K562 (cell line): ENCODE measurements at regions of chr1 and their contacts with region 1.

Region 1: DNA sequence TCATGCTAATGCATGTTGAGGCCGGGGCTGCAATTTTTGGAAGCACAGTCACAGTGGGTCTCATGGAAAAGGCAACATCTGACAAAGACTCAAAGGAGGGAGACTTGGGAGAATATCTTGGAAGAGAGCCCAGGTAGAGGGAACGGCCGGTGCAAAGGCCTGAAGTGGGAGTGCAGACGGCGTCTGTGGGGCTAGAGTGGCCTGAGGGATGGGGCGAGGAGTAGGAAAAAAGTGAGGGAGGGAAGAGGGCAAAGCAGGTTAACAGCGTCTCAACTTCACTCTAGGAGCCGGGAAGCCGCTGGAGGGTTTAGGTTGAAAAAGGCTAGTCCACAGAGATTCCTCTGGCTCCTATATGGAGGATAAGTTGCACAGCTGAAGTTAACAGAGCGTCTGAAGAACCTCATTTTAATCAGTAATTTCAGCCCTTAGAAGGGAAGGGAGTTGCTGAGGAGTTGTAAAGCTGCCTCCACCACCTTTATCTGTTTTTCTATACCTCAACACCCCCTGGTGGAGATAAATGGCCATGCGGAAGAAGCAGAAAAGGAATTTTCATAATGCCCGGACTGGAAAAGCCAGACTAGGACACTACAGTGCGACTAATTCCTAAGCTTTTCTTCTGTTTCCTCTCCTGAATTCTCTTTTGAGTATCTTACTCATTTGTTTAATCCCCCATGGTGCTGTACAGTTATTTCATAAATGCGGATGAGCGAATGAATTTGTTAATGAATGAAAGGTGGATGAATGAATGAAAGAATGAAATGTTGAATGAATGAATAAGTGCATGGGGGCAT is 78.7 kb upstream of the ZNF281 start:
- DNase-seq: peak; percentile 60 to 74 (median 66)
- ATAC-seq: peak; percentile 92
- H3K4me3 ChIP-seq: no peak overlapping the region
- H3K27ac ChIP-seq: no peak overlapping the region
- H3K4me1 ChIP-seq: no peaks in the 10 kb centered on the region
- H3K27me3 ChIP-seq: peaks cover 21 to 29% of the 10 kb centered on the region in 2 experiments
- CTCF ChIP-seq: peak; percentile 76 to 94 (median 85)
- EP300 ChIP-seq: no peak
- POLR2A ChIP-seq: no peak
- RAD21 ChIP-seq: peak; percentile 96 to 98

Region 2: GRCh38 chr1:199684686-199685273 is 803.8 kb before region 1 on chr1:
- CTCF ChIA-PET with region 1: interaction called, 6 read pairs
- POLR2A ChIA-PET with region 1: no interaction called
- in situ Hi-C with region 1: loop called (anchors 10 kb)
- intact Hi-C with region 1: loop called (anchors 1 kb)
- DNase-seq: peak; percentile 43 to 53 (median 44)
- ATAC-seq: peak; percentile 92
- H3K4me3 ChIP-seq: no peak overlapping the region
- H3K27ac ChIP-seq: no peak overlapping the region
- H3K4me1 ChIP-seq: no peaks in the 10 kb centered on the region
- H3K27me3 ChIP-seq: no peaks in the 10 kb centered on the region
- CTCF ChIP-seq: peak; percentile 55 to 79 (median 71)
- EP300 ChIP-seq: no peak
- POLR2A ChIP-seq: no peak
- RAD21 ChIP-seq: peak; percentile 90 to 91

Region 3: GRCh38 chr1:199954699-199955098 is 533.9 kb before region 1 on chr1:
- CTCF ChIA-PET with region 1: no interaction called
- POLR2A ChIA-PET with region 1: no interaction called
- in situ Hi-C with region 1: no loop called
- intact Hi-C with region 1: loop called (anchors 10 kb)
- DNase-seq: peak; percentile 28 to 50 (median 32)
- ATAC-seq: peak; percentile 79
- H3K4me3 ChIP-seq: no peak overlapping the region
- H3K27ac ChIP-seq: no peak overlapping the region
- H3K4me1 ChIP-seq: peaks cover 0 to 6% of the 10 kb centered on the region in 2 experiments; a peak in 2 of 5 replicates
- H3K27me3 ChIP-seq: peaks cover 0 to 5% of the 10 kb centered on the region in 2 experiments; a peak in 1 of 5 replicates
- CTCF ChIP-seq: peak; percentile 44 to 54 (median 49)
- EP300 ChIP-seq: no peak
- POLR2A ChIP-seq: no peak
- RAD21 ChIP-seq: peak; percentile 33 to 52; a peak in 3 of 4 replicates

Region 4: GRCh38 chr1:200139661-200140250 is 348.8 kb before region 1 on chr1:
- CTCF ChIA-PET with region 1: interaction called, 8 read pairs
- POLR2A ChIA-PET with region 1: no interaction called
- in situ Hi-C with region 1: no loop called
- intact Hi-C with region 1: loop called (anchors 1 kb)
- DNase-seq: peak; percentile 51 to 78 (median 62)
- ATAC-seq: peak; percentile 99
- H3K4me3 ChIP-seq: no peak overlapping the region
- H3K27ac ChIP-seq: no peak overlapping the region
- H3K4me1 ChIP-seq: no peaks in the 10 kb centered on the region
- H3K27me3 ChIP-seq: peaks cover 0 to 4% of the 10 kb centered on the region in 2 experiments; a peak in 3 of 5 replicates
- CTCF ChIP-seq: peak; percentile 71 to 83 (median 75)
- EP300 ChIP-seq: no peak
- POLR2A ChIP-seq: no peak
- RAD21 ChIP-seq: peak; percentile 82 to 93

Region 5: DNA sequence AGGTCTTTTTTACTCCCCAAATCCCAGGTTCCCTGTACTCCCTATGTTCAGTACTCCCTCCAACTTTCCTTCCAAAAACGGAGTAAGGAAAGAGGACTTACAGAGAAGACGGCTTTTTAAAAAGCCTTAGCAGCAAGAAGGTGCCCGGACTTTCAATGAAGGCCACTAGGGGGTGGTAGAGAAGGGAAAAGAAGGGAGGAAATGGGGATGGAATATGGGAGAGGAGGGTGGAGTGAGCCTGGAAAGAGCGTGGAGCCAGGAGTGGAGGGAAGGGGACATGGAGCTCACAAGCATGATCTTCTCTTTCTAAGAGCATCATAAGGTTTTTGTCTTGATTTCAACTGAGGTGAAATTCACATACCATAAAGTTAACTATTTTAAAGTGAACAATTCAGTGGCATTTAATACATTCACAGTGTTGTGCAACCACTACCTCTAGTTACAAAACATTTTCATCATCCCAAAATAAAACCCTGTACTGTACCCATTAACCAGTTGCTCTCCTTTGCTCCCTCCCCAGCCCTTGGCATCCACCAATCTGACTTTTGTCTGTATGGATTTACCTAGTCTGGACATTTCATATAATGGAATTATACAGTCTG is 208.7 kb before region 1 on chr1:
- CTCF ChIA-PET with region 1: interaction called, 15 read pairs
- POLR2A ChIA-PET with region 1: no interaction called
- in situ Hi-C with region 1: loop called (anchors 25 kb)
- intact Hi-C with region 1: loop called (anchors 1 kb)
- DNase-seq: peak; percentile 56 to 69 (median 64)
- ATAC-seq: peak; percentile 88
- H3K4me3 ChIP-seq: no peak overlapping the region
- H3K27ac ChIP-seq: no peak overlapping the region
- H3K4me1 ChIP-seq: peaks cover 0 to 11% of the 10 kb centered on the region in 2 experiments; a peak in 2 of 5 replicates
- H3K27me3 ChIP-seq: peaks cover 0 to 9% of the 10 kb centered on the region in 2 experiments; a peak in 1 of 5 replicates
- CTCF ChIP-seq: peak; percentile 76 to 90 (median 77)
- EP300 ChIP-seq: no peak
- POLR2A ChIP-seq: no peak
- RAD21 ChIP-seq: peak; percentile 46 to 76

Region 6: GRCh38 chr1:200367841-200368534 is 120.6 kb before region 1 on chr1:
- CTCF ChIA-PET with region 1: no interaction called
- POLR2A ChIA-PET with region 1: no interaction called
- in situ Hi-C with region 1: no loop called
- intact Hi-C with region 1: loop called (anchors 5 kb)
- DNase-seq: no peak
- ATAC-seq: no peak; the same call in 2 of the 3 replicates
- H3K4me3 ChIP-seq: no peak overlapping the region
- H3K27ac ChIP-seq: no peak overlapping the region
- H3K4me1 ChIP-seq: no peaks in the 10 kb centered on the region
- H3K27me3 ChIP-seq: peaks cover 23 to 24% of the 10 kb centered on the region in 2 experiments
- CTCF ChIP-seq: no peak
- EP300 ChIP-seq: no peak
- POLR2A ChIP-seq: no peak
- RAD21 ChIP-seq: no peak